ENCODE measurements at regions of chr19 and their contacts with region 1.

Region 1: DNA sequence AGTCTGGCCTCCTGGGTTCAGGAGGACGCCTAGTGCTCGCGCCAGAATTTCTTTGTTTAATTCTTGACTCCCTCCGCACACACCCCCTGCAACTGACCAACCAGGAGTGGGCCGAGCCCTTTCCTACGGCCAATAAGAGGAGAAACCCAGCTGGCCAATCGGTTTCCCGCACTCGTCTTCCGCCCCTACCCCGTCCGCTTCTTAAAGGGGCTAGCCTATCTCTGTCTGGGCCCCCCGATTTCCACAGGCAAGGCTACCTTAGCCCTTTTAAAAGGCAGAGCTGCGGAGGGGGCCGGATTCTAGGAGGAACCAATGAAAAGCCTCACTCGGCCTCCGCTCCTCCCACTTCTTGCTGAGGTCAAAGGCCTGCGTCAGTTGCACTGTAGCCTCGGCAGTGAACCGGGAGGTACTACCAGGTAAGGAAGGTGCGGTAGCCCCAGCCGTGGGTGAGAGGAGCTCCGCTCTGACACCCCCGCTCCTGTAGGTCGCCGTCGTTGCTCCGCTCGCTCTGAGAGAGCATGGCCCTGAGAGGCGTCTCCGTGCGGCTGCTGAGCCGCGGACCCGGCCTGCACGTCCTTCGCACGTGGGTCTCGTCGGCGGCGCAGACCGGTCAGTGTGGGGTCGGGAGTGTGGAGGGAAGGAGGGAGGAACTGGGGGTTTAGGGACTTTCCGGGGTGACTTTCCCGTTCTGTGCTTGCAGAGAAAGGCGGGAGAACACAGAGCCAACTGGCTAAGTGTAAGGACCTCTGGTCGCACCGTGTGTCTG is at the start of gene GCDH:
- DNase-seq: peak; percentile 81
- ATAC-seq: peak; percentile 93
- H3K4me3 Mint-ChIP-seq: peak within 1 kb of the TSS; percentile 98
- H3K27ac Mint-ChIP-seq: peak within 1 kb of the TSS; percentile 90
- H3K4me1 Mint-ChIP-seq: peaks cover 21% of the 10 kb centered on the region
- H3K27me3 Mint-ChIP-seq: no peaks in the 10 kb centered on the region
- CTCF ChIP-seq: no peak
- total RNA-seq, gene GCDH: 62.3 and 73.9 TPM in 2 replicates

Region 2: DNA sequence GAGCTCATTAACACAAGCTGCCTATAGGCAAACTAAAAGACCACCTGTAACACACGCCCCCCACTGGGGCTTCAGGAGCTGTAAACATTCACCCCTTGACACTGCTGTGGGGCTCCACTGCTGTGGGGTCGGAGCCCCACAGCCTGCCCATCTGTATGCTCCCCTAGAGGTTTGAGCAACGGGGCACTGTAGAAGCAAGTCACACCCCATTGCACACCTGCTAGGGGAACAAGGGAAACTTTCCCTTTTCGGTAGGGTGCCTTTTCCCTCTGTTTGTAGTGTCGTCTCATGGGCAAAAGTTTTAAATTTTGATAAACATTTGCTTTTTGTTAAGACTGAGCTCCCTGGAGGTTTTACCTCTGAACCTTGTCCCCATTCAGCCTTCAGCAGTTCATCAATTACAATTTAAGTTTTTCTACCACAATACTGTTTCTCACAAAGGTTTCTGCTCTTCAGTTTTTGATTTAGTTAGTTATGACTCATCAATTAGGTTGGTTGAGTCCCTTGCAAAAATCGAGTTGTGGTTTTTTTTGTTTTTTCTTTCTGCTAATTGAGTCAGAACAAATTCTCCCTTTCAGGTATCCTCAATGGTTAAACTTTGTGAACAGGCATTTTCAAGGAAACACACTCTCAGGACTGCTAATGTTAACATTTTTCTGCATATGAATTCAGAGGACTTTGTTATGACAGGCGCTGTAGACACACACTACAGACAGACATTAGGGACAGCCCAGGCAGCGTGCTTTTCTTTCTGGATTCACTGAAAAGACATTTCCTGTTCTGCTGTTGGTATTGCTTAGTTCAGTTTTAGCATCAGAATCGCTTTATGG is 890.6 kb before region 1 on chr19:
- CTCF ChIA-PET with region 1: no interaction called
- POLR2A ChIA-PET with region 1: interaction called, 10 read pairs
- intact Hi-C with region 1: no loop called
- DNase-seq: peak; percentile 23
- ATAC-seq: peak; percentile 84
- H3K4me3 Mint-ChIP-seq: peak overlapping the region; percentile 63
- H3K27ac Mint-ChIP-seq: peak overlapping the region; percentile 82
- H3K4me1 Mint-ChIP-seq: peaks cover 31% of the 10 kb centered on the region
- H3K27me3 Mint-ChIP-seq: no peaks in the 10 kb centered on the region
- CTCF ChIP-seq: no peak

Region 3: DNA sequence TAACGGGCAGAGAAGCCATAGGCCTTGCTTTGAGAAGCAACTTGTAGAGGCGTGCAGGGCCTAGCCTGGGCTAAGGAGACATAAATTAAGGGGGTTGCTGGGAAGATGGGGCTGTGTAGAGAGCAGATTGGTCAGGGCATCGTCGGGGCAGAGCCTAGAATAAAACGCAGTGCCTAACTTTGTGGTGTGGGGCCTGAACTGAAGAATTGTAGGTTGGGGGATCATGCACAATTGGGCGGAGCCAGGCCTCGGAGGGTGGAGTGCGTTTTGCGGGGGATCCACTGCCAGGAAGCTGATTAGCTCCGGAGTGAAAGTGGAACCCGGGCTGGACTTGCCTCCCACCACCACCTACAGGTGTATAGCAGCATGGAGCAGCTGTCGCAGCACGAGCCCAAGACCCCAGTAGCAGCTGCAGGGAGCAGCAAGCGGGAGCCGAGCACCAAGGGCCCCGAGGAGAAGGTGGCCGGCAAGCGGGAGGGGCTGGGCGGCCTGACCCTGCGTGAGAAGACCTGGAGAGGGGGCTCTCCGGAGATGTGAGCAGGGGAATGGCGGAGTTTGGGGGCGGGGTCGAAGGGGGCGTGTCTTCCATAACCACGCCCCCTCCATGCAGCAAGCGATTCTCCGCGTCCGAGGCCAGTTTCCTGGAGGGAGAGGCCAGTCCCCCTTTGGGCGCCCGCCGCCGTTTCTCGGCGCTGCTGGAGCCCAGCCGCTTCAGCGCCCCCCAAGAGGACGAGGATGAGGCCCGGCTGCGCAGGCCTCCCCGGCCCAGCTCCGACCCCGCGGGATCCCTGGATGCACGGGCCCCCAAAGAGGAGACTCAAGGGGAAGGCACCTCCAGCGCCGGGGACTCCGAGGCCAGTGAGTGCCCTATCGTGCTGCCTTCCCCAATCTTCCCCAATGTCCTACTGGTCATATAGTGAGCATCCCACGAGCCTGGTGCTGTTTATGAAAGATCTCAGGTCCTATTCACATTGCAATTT is 23.6 kb before region 1 on chr19:
- CTCF ChIA-PET with region 1: no interaction called
- POLR2A ChIA-PET with region 1: interaction called, 3 read pairs
- intact Hi-C with region 1: loop called (anchors 2 kb)
- DNase-seq: peak; percentile 74
- ATAC-seq: peak; percentile 89
- H3K4me3 Mint-ChIP-seq: peak overlapping the region; percentile 85
- H3K27ac Mint-ChIP-seq: peak overlapping the region; percentile 14
- H3K4me1 Mint-ChIP-seq: peaks cover 13% of the 10 kb centered on the region
- H3K27me3 Mint-ChIP-seq: peaks cover 2% of the 10 kb centered on the region
- CTCF ChIP-seq: no peak

Region 4: GRCh38 chr19:12956446-12957388 is 65.7 kb after region 1 on chr19 and contains the start of gene GADD45GIP1:
- CTCF ChIA-PET with region 1: no interaction called
- POLR2A ChIA-PET with region 1: interaction called, 9 read pairs
- intact Hi-C with region 1: loop called (anchors 1 kb)
- DNase-seq: peak; percentile 78
- ATAC-seq: peak; percentile 98
- H3K4me3 Mint-ChIP-seq: peak within 1 kb of the TSS; percentile 91
- H3K27ac Mint-ChIP-seq: peak within 1 kb of the TSS; percentile 97
- H3K4me1 Mint-ChIP-seq: peaks cover 33% of the 10 kb centered on the region
- H3K27me3 Mint-ChIP-seq: no peaks in the 10 kb centered on the region
- CTCF ChIP-seq: no peak
- total RNA-seq, gene GADD45GIP1: 16.7 and 19.6 TPM in 2 replicates

Region 5: DNA sequence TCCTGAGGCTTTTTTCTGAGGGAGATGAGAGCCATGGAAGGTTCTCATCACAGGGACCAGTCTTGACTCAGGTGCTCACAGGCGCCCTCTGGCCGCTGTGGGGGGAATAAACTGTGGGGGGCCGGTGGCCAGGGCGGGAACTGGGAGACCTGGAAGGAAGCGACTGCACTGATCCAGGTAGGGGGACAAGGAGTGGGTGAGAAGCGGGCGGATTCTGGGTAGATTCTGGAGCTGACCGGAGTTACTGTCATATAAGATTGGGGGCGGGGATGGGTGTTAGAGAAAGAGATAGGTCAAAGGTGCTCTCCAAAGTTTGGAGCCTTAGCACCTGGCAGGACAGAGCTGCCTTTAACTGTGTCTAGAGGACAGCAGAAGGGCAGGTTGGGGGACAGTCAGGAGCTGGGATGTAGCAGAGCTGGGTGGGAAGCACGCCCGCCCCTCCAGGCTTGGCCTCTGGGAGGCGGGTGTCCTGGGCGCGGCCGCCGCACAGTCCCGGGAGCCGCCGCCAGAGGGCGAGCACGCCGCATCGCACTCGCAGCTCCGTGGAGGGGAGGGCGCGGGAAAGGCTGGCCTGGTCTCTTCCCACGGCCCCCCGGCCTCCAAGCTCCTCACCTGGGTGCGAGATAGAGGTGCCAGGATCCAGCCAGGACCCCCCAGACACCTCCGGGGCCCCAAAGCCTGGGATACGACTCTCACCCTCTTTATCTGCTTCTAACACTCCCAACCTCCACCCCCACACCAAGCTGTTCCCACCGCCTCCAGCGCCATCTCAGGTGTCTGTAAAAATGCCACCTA is 74.2 kb after region 1 on chr19:
- CTCF ChIA-PET with region 1: interaction called, 39 read pairs
- POLR2A ChIA-PET with region 1: interaction called, 13 read pairs
- intact Hi-C with region 1: no loop called
- DNase-seq: peak; percentile 91
- ATAC-seq: peak; percentile 97
- H3K4me3 Mint-ChIP-seq: peak overlapping the region; percentile 87
- H3K27ac Mint-ChIP-seq: peak overlapping the region; percentile 69
- H3K4me1 Mint-ChIP-seq: peaks cover 7% of the 10 kb centered on the region
- H3K27me3 Mint-ChIP-seq: no peaks in the 10 kb centered on the region
- CTCF ChIP-seq: no peak

Measured in activated B cell treated with CpG ODN at 0.5 μM for 24 hours (primary cell).